Calu3 (cell line): ENCODE measurements at regions of chr9 and their contacts with region 1.

Region 1: DNA sequence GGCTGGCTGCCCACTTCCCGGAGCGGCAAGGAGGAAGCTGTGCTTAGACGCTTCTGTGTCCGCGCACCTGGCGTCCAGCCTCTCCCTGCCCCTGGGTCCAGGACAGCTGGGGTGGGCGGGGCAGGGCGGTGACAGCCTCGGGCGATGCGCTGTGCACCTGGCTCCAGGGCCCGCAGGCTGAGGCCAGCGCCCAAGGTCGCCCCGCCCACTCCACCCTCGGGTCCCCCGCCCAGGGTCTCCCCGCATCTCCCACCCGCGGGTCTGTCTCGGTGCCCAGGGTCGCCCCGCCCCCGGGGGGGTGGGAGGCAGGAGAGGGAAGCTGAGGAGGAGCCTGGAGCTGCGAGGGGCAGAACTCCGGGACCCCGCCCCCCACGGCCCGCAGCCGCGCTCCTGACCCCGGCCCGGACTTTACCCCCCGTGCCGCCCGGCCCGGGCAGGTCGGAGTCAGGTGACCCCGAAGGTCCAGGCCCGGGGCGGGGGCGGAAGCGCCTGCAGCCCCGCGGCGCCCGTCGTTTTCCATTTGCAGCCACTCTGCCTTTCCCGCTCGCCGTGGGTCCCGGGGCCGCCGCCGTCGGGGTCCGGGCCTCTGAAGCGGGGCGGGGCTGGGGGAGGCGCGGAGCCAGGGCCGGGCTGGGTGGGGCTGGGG is at the start of gene ENTPD8:
- DNase-seq: peak; percentile 71
- H3K4me3 Mint-ChIP-seq: peak within 1 kb of the TSS; percentile 72
- H3K27ac Mint-ChIP-seq: peak within 1 kb of the TSS; percentile 66
- H3K4me1 Mint-ChIP-seq: peaks cover 6% of the 10 kb centered on the region
- H3K27me3 Mint-ChIP-seq: no peaks in the 10 kb centered on the region
- CTCF ChIP-seq: no peak
- total RNA-seq, gene ENTPD8: 0.97 and 1.6 TPM in 2 replicates

Region 2: DNA sequence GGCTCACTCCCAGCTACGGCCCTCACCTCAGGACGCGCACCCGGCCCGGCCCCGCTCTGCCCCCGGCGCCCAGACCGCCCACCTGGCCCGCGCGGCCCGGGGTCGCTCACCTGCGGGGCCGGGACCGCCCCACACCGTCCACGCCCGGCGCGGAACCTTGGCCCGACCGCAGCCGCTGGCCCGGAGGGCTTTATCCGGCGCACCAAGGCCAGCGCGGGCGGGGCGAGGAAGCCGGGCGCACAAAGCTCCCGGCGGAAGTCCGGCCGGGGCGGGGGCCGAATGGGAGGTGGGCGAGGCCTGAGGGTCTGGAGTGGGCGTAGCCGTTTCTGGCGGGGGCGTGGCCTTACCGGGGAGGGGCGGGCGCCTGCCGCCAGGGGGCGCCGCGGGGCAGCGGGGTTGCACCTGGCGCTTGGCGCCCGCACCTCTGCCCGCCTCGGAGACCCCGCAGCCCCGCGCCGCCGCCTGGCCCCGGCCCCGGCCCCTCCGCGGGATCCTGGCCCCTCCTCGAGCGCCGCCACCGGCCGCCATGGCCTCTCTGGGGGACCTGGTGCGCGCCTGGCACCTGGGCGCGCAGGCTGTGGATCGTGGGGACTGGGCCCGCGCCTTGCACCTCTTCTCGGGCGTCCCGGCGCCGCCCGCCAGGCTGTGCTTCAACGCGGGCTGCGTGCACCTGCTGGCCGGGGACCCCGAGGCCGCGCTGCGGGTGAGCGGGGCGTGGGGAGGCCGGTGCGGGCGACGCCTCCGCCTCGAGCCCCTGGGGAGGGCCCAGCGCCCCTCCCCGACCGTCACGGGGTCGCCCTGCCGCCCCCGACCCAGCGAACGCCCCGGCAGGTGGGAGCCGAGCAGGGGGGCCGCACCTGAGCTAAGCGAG is 18.2 kb before region 1 on chr9 and contains the starts of genes EXD3 and NOXA1:
- CTCF ChIA-PET with region 1: interaction called, 11 read pairs
- intact Hi-C with region 1: no loop called
- DNase-seq: peak; percentile 94
- H3K4me3 Mint-ChIP-seq: peak within 1 kb of the TSS; percentile 69
- H3K27ac Mint-ChIP-seq: peak within 1 kb of the TSS; percentile 36
- H3K4me1 Mint-ChIP-seq: peaks cover 8% of the 10 kb centered on the region
- H3K27me3 Mint-ChIP-seq: no peaks in the 10 kb centered on the region
- CTCF ChIP-seq: peak; percentile 42
- total RNA-seq, gene EXD3: 13.2 and 15.3 TPM in 2 replicates
- total RNA-seq, gene NOXA1: 12.0 and 12.3 TPM in 2 replicates

Region 3: GRCh38 chr9:137682431-137682991 is 241.1 kb after region 1 on chr9:
- CTCF ChIA-PET with region 1: no interaction called
- intact Hi-C with region 1: no loop called
- DNase-seq: no peak
- H3K4me3 Mint-ChIP-seq: no peak overlapping the region
- H3K27ac Mint-ChIP-seq: no peak overlapping the region
- H3K4me1 Mint-ChIP-seq: peaks cover 7% of the 10 kb centered on the region
- H3K27me3 Mint-ChIP-seq: no peaks in the 10 kb centered on the region
- CTCF ChIP-seq: no peak